Activated CD4-positive, alpha-beta memory T cell treated with anti-CD3 and anti-CD28 coated beads for 36 hours (primary cell): ENCODE measurements at regions of chr11 and their contacts with region 1.

Region 1: DNA sequence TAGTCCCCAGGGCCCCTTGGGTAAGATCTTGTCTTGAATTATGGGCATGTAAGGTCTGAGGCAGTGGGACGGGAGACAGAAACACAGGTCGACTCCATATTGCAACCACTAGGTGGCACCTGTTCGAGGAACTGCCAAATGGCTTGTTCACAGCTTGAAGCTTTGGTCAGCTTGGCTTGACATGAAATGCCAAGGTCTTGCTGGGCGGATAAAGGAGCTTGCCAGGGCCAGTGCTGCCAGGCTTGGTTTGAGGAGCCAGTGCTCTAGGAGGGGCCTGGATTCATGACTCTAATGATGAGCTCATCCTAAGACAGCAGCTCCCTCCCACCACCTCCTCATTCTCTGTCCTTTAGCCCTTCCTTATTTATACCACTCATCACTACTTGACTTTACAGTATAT is 11.9 kb upstream of the NRIP3 start:
- DNase-seq: peak; percentile 70
- H3K4me3 Mint-ChIP-seq: no peak overlapping the region
- H3K27ac Mint-ChIP-seq: no peak overlapping the region
- H3K4me1 Mint-ChIP-seq: peaks cover 18% of the 10 kb centered on the region
- H3K27me3 Mint-ChIP-seq: no peaks in the 10 kb centered on the region

Region 2: GRCh38 chr11:9003573-9004309 is 11.9 kb before region 1 on chr11 and contains the start of gene NRIP3:
- CTCF ChIA-PET with region 1: interaction called, 16 read pairs
- POLR2A ChIA-PET with region 1: no interaction called
- intact Hi-C with region 1: no loop called
- DNase-seq: peak; percentile 74
- H3K4me3 Mint-ChIP-seq: peak within 1 kb of the TSS; percentile 70
- H3K27ac Mint-ChIP-seq: no peak within 1 kb of the TSS
- H3K4me1 Mint-ChIP-seq: peaks cover 27% of the 10 kb centered on the region
- H3K27me3 Mint-ChIP-seq: peaks cover 36% of the 10 kb centered on the region
- total RNA-seq, gene NRIP3: 2.7 to 2.9 TPM

Region 3: DNA sequence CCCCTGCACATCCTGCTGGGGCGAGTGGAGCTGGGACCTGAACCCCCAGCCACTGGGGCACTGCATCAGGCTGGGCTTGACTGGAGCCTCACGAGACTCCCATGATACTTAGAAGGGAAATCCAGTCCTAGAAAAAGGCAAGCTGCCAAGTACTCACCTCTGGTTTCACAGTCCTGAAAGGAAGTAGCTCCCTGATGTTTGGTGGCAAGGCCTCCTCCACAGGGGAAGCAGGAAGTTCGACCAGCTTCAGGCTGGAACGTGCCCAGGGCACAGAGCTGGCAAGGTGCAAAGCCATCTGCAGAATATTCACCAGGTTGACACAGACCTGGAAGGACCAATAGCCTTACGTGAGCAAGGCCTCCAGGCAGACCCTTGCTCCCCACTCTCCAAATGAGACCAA is 14.9 kb after region 1 on chr11:
- CTCF ChIA-PET with region 1: interaction called, 28 read pairs
- POLR2A ChIA-PET with region 1: no interaction called
- intact Hi-C with region 1: no loop called
- DNase-seq: no peak
- H3K4me3 Mint-ChIP-seq: no peak overlapping the region
- H3K27ac Mint-ChIP-seq: no peak overlapping the region
- H3K4me1 Mint-ChIP-seq: no peaks in the 10 kb centered on the region
- H3K27me3 Mint-ChIP-seq: no peaks in the 10 kb centered on the region

Region 4: GRCh38 chr11:9038541-9038940 is 22.9 kb after region 1 on chr11:
- CTCF ChIA-PET with region 1: interaction called, 14 read pairs
- POLR2A ChIA-PET with region 1: no interaction called
- intact Hi-C with region 1: no loop called
- DNase-seq: no peak
- H3K4me3 Mint-ChIP-seq: no peak overlapping the region
- H3K27ac Mint-ChIP-seq: no peak overlapping the region
- H3K4me1 Mint-ChIP-seq: no peaks in the 10 kb centered on the region
- H3K27me3 Mint-ChIP-seq: peaks cover 6% of the 10 kb centered on the region

Region 5: GRCh38 chr11:9047964-9048523 is 32.4 kb after region 1 on chr11:
- CTCF ChIA-PET with region 1: interaction called, 12 read pairs
- POLR2A ChIA-PET with region 1: no interaction called
- intact Hi-C with region 1: no loop called
- DNase-seq: no peak
- H3K4me3 Mint-ChIP-seq: no peak overlapping the region
- H3K27ac Mint-ChIP-seq: no peak overlapping the region
- H3K4me1 Mint-ChIP-seq: no peaks in the 10 kb centered on the region
- H3K27me3 Mint-ChIP-seq: no peaks in the 10 kb centered on the region

Region 6: GRCh38 chr11:9060700-9061111 is 45.0 kb after region 1 on chr11:
- CTCF ChIA-PET with region 1: interaction called, 11 read pairs
- POLR2A ChIA-PET with region 1: no interaction called
- intact Hi-C with region 1: no loop called
- DNase-seq: peak; percentile 88
- H3K4me3 Mint-ChIP-seq: no peak overlapping the region
- H3K27ac Mint-ChIP-seq: no peak overlapping the region
- H3K4me1 Mint-ChIP-seq: peaks cover 12% of the 10 kb centered on the region
- H3K27me3 Mint-ChIP-seq: peaks cover 35% of the 10 kb centered on the region

Region 7: DNA sequence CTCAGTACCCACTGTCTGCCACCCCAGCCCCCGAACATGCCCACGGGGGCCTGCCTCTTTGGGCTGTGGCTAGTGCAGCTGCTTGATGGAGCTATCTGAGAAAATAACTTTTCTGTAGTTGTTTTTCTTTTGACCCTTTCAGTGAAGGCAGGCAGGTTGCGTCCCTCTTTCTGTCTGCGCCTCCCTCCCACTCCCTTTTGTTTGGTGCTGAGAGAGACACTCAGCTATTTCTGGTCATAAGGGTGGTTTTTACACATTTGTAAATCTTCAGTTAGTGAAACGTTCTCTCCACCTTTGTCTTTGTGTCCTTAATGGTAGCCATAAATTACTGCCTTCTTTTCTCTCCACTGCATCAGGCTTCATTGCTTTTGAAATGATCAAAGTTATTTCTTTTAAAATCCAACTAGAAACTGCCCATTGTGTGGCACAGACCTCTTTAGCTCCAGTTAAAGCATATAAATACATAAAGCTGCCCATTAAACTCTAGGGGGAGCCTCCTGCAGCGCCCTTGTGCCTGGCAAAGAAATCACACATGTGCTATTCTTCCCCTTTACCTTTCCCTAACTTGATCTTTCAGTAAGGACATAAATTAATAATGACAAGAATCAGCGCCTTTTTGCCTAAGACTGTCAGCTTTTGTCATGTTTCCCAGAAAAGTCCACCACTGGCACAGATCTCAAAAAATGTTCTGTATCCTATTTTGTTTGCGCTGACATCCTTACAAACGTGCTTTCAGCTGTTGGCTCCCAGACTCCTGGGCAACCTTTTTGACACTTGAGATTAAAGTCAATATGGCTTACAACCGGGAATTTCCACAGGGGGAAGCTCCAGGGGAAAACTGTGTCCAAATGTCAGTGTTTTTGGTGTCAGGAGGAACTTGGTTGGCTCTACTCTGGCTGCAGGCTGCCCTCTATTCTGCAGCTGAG is 77.4 kb after region 1 on chr11:
- CTCF ChIA-PET with region 1: interaction called, 46 read pairs
- POLR2A ChIA-PET with region 1: no interaction called
- intact Hi-C with region 1: no loop called
- DNase-seq: no peak
- H3K4me3 Mint-ChIP-seq: no peak overlapping the region
- H3K27ac Mint-ChIP-seq: no peak overlapping the region
- H3K4me1 Mint-ChIP-seq: peaks cover 2% of the 10 kb centered on the region
- H3K27me3 Mint-ChIP-seq: peaks cover 52% of the 10 kb centered on the region